WTC11 (cell line): ENCODE measurements at regions of chr1 and their contacts with region 1.

Region 1: GRCh38 chr1:119778359-119778758 is 9.7 kb upstream of the HMGCS2 start:
- DNase-seq: no peak
- ATAC-seq: no peak
- H3K4me3 Mint-ChIP-seq: no peak overlapping the region
- H3K27ac Mint-ChIP-seq: no peak overlapping the region
- H3K4me1 Mint-ChIP-seq: peaks cover 9% of the 10 kb centered on the region
- H3K27me3 Mint-ChIP-seq: no peaks in the 10 kb centered on the region; the same call in 1 of the 2 replicates
- CTCF ChIP-seq: no peak

Region 2: GRCh38 chr1:119565131-119565772 is 213.1 kb before region 1 on chr1:
- CTCF ChIA-PET with region 1: no interaction called
- POLR2A ChIA-PET with region 1: no interaction called
- DNase-seq: no peak
- ATAC-seq: no peak
- H3K4me3 Mint-ChIP-seq: no peak overlapping the region
- H3K27ac Mint-ChIP-seq: no peak overlapping the region
- H3K4me1 Mint-ChIP-seq: peaks cover 6% of the 10 kb centered on the region; the same call in 1 of the 2 replicates
- H3K27me3 Mint-ChIP-seq: 0 out of 2 replicates have a peak, but pooled peaks cover 9% of the 10 kb centered on the region
- CTCF ChIP-seq: no peak

Region 3: GRCh38 chr1:119697598-119697997 is 80.8 kb before region 1 on chr1:
- CTCF ChIA-PET with region 1: no interaction called
- POLR2A ChIA-PET with region 1: interaction called, 13 read pairs
- DNase-seq: no peak
- ATAC-seq: no peak
- H3K4me3 Mint-ChIP-seq: no peak overlapping the region
- H3K27ac Mint-ChIP-seq: no peak overlapping the region
- H3K4me1 Mint-ChIP-seq: no peaks in the 10 kb centered on the region
- H3K27me3 Mint-ChIP-seq: peaks cover 20% of the 10 kb centered on the region
- CTCF ChIP-seq: no peak

Region 4: GRCh38 chr1:119727996-119728395 is 50.4 kb before region 1 on chr1:
- CTCF ChIA-PET with region 1: no interaction called
- POLR2A ChIA-PET with region 1: no interaction called
- DNase-seq: no peak
- ATAC-seq: peak; percentile 27; the same call in 1 of the 2 replicates
- H3K4me3 Mint-ChIP-seq: no peak overlapping the region
- H3K27ac Mint-ChIP-seq: peak overlapping the region; percentile 28
- H3K4me1 Mint-ChIP-seq: peaks cover 16% of the 10 kb centered on the region
- H3K27me3 Mint-ChIP-seq: no peaks in the 10 kb centered on the region
- CTCF ChIP-seq: no peak